Vagina (tissue), 2 donors: ENCODE measurements at regions of chr17 and their contacts with region 1.

Region 1: DNA sequence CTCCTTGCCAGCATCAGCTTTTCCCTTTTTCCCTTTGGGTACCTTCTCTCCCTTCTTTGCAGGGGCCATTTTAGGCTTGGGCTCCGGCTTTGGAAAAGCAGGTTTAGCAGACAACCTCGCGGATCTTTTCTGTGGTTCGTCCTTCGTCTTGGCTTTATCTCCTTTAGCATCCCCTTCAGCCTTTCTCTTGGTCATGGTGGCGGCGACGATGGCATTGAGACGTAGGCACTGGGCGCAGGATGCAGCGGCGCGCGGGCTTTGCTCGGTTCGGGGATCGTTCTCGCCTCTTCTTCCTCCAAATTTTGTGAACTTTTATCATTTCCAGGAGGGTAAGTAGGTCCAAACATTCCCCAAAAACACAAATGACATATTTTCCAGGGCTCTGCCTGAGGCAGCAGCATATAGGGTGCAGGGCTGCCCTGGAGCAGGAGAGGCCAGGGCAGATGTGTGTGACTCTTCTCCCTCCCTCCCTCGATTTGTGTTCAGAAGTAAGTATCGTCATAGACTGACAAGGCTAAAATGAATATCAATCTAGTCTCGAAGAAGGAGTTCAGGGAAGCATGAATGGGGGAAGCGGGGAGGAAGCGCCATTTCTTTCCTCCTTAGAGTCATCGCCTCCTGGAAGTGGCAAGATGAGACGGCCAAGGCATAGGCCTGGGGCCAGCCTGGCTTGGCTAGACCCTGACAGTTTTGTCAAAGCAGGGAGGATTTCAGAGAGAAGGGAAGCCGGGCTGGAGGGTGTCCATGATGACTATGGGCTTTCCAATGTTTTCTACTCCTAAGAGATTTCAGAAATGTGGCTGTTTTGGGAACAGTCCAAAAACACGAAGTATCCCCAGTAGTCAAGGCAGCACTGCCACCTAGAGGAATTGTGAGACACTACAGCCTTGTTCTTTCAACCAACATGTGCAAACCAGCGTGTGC is 13.2 kb downstream of the CHCT1 start:
- DNase-seq: no peak
- H3K4me3 ChIP-seq: no peak overlapping the region
- H3K27ac ChIP-seq: no peak overlapping the region
- H3K4me1 ChIP-seq: peaks cover 8% of the 10 kb centered on the region
- H3K27me3 ChIP-seq: no peaks in the 10 kb centered on the region
- CTCF ChIP-seq: peak; percentile 66 to 96 (median 95)
- POLR2A ChIP-seq: no peak

Region 2: GRCh38 chr17:60091908-60092331 is 343.6 kb before region 1 on chr17:
- intact Hi-C with region 1: loop called (anchors 10 kb)
- DNase-seq: no peak
- H3K4me3 ChIP-seq: no peak overlapping the region
- H3K27ac ChIP-seq: no peak overlapping the region
- H3K4me1 ChIP-seq: no peaks in the 10 kb centered on the region
- H3K27me3 ChIP-seq: no peaks in the 10 kb centered on the region
- CTCF ChIP-seq: no peak
- POLR2A ChIP-seq: no peak

Region 3: GRCh38 chr17:60468371-60468770 is 32.9 kb after region 1 on chr17:
- intact Hi-C with region 1: no loop called
- DNase-seq: no peak
- H3K4me3 ChIP-seq: no peak overlapping the region
- H3K27ac ChIP-seq: no peak overlapping the region
- H3K4me1 ChIP-seq: peaks cover 12% of the 10 kb centered on the region
- H3K27me3 ChIP-seq: no peaks in the 10 kb centered on the region
- CTCF ChIP-seq: no peak
- POLR2A ChIP-seq: no peak